ENCODE measurements at regions of chr3 and their contacts with region 1.

Region 1: GRCh38 chr3:134344560-134344959 is 29.7 kb downstream of the AMOTL2 start:
- DNase-seq: no peak
- H3K4me3 ChIP-seq: no peak overlapping the region
- H3K27ac ChIP-seq: no peak overlapping the region
- H3K4me1 ChIP-seq: peaks cover 6% of the 10 kb centered on the region
- H3K27me3 ChIP-seq: no peaks in the 10 kb centered on the region
- CTCF ChIP-seq: no peak
- POLR2A ChIP-seq: no peak

Region 2: GRCh38 chr3:134357261-134358184 is 13.0 kb after region 1 on chr3:
- CTCF ChIA-PET with region 1: interaction called, 10 read pairs
- POLR2A ChIA-PET with region 1: no interaction called
- dilution Hi-C with region 1: no loop called
- intact Hi-C with region 1: no loop called
- DNase-seq: no peak
- H3K4me3 ChIP-seq: no peak overlapping the region
- H3K27ac ChIP-seq: no peak overlapping the region
- H3K4me1 ChIP-seq: peaks cover 13% of the 10 kb centered on the region
- H3K27me3 ChIP-seq: no peaks in the 10 kb centered on the region
- CTCF ChIP-seq: no peak
- POLR2A ChIP-seq: peak; percentile 4